Ovary (tissue), 10 donors: ENCODE measurements at regions of chr19 and their contacts with region 1.

Region 1: GRCh38 chr19:21767065-21767800 is at the start of gene ZNF100:
- DNase-seq: peak; percentile 89 to 93 (median 91)
- H3K4me3 ChIP-seq: peak within 1 kb of the TSS; percentile 73
- H3K27ac ChIP-seq: peak within 1 kb of the TSS; percentile 70 to 85
- H3K4me1 ChIP-seq: no peaks in the 10 kb centered on the region
- H3K27me3 ChIP-seq: no peaks in the 10 kb centered on the region
- CTCF ChIP-seq: no peak
- EP300 ChIP-seq: no peak
- POLR2A ChIP-seq: peak; percentile 37
- total RNA-seq, gene ZNF100: 4.3 to 23.6 (median 17.5) TPM

Region 2: GRCh38 chr19:21593934-21594820 is 173.1 kb before region 1 on chr19:
- intact Hi-C with region 1: no loop called
- DNase-seq: peak in 1 of 5 donors; percentile 82
- H3K4me3 ChIP-seq: no peak overlapping the region
- H3K27ac ChIP-seq: peak overlapping the region in 1 of 2 donors; percentile 8
- H3K4me1 ChIP-seq: no peaks in the 10 kb centered on the region
- H3K27me3 ChIP-seq: no peaks in the 10 kb centered on the region
- CTCF ChIP-seq: no peak
- EP300 ChIP-seq: no peak
- POLR2A ChIP-seq: no peak

Region 3: DNA sequence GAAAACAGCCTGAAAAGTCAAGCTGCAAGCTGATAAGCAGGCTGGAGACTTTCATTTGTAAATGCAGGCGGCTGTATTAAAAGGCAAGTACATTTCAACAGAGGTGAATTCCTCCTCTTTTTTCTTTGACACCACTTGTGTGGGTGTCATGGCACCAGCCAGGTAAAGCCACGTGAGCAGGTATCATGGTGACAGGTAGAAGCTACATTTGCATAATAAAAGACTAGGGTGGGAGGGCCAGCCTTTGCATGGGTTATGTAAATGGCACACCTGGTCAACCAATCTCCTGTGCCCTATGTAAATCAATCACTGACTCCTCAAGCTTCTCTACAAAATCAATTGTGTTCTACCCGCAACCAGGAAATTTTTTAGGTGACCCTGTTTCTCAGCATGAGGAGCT is 68.0 kb before region 1 on chr19:
- intact Hi-C with region 1: no loop called
- DNase-seq: no peak
- H3K4me3 ChIP-seq: no peak overlapping the region
- H3K27ac ChIP-seq: no peak overlapping the region
- H3K4me1 ChIP-seq: peaks cover 7% of the 10 kb centered on the region
- H3K27me3 ChIP-seq: no peaks in the 10 kb centered on the region
- CTCF ChIP-seq: no peak
- EP300 ChIP-seq: no peak
- POLR2A ChIP-seq: no peak

Region 4: DNA sequence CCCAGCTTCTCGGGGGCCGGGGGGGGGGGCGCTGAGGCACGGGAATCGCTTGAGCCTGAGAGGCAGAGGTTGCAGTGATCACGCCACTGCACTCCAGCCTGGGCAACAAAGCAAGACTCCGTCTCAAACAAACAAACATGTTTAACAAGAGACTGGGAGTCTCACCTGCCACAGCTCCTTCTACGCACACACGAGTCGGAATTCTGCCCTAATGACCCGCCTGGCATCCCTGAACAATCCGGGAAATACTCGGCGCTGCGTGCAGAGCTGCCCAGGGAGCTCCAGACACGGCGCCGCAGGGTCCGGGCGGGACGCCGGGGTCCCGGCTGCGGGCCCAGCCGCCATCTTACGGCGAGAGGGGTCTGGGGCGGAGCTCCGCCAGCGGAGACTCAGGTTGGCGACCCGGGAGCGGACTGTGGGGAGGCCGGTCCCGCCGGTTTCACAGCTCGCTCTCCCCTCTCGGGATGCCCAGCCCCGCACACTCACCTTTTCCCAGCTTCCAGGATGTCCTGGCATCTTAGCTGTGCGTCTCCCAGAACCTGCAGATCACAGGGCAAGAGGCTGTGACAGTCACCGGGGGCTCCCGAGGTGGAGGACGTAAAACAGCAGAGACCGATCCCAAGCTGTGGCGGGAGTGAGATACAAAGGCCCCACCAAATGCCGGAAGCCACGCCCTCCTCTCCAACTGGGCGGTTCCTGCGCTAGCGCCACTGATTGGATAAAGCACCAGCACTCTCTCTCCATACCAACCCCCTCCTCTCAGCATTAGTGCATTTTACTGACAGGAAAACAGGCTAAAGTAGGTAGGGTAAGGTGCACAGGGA is 1506.6 kb after region 1 on chr19:
- intact Hi-C with region 1: loop called in 1 of 4 experiments (anchors 5 kb)
- DNase-seq: peak; percentile 92 to 95 (median 92)
- H3K4me3 ChIP-seq: peak overlapping the region; percentile 97
- H3K27ac ChIP-seq: peak overlapping the region; percentile 80 to 82
- H3K4me1 ChIP-seq: peaks cover 3% of the 10 kb centered on the region
- H3K27me3 ChIP-seq: no peaks in the 10 kb centered on the region
- CTCF ChIP-seq: no peak
- EP300 ChIP-seq: no peak
- POLR2A ChIP-seq: peak; percentile 83